Activated CD4-positive, alpha-beta T cell treated with anti-CD3 and anti-CD28 coated beads, Interleukin-2, amount 10 ng/mL, durations not matched to agents 24 days and 14 days (primary cell): ENCODE measurements at regions of chr3 and their contacts with region 1.

Region 1: GRCh38 chr3:22257252-22257651 is 506.2 kb upstream of the ZNF385D start:
- DNase-seq: no peak
- H3K4me3 Mint-ChIP-seq: no peak overlapping the region
- H3K27ac Mint-ChIP-seq: no peak overlapping the region
- H3K4me1 Mint-ChIP-seq: no peaks in the 10 kb centered on the region
- H3K27me3 Mint-ChIP-seq: no peaks in the 10 kb centered on the region

Region 2: DNA sequence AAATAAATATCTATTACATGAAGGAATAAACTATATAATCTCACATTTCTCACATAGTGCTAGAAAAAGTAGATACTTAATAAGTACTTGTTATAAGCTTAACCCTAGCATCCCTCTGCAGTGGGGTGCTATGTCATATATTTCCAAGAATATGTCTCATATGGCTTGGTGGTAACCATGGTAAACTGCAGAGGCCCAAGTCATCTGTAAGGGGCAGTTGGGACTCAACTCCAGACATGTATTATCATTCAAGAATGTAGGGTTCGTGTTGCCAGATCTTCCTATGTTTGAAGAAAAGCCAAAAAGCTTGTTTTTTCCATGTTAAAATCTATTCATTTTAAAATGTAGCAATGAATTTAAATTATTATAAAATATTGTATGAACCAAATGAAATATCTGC is 552.5 kb before region 1 on chr3:
- intact Hi-C with region 1: no loop called
- DNase-seq: no peak
- H3K4me3 Mint-ChIP-seq: no peak overlapping the region
- H3K27ac Mint-ChIP-seq: no peak overlapping the region
- H3K4me1 Mint-ChIP-seq: no peaks in the 10 kb centered on the region
- H3K27me3 Mint-ChIP-seq: no peaks in the 10 kb centered on the region

Region 3: DNA sequence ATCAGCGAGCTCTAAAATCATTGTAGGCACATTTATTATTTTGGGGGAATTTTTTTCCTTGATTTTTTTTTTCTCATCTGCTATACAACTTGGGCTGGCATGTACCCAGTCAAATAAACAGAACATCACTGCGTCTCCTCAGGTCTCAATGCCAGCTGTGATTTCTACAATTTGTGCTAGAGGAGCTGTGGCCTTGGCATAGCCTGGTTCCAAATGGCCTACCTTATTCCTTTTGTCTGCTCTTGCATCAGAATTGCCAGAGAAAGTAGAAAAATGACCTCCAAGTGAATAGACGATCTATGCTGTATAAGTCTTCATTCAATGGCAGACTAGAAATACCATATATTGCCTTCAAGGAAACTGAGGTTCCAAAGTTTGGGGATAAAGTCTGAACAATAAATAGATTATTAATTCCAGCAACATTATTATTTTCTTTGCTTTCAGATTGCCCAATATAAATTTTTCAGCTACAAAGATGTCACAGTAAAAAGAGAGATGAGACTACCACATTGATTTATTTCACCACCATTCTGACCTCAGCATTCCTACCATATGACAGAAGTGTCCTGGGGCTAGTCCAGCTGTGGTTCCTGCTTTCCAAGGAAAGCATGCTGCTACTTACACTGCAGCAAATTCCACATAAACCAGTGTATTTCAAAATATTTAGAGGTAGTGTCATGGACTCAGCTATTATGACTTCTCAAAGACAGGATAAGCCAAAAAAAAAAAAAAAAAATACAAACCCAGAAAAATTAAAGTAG is 12.3 kb before region 1 on chr3:
- intact Hi-C with region 1: loop called (anchors 1 kb)
- DNase-seq: no peak
- H3K4me3 Mint-ChIP-seq: no peak overlapping the region
- H3K27ac Mint-ChIP-seq: no peak overlapping the region
- H3K4me1 Mint-ChIP-seq: no peaks in the 10 kb centered on the region
- H3K27me3 Mint-ChIP-seq: no peaks in the 10 kb centered on the region

Region 4: DNA sequence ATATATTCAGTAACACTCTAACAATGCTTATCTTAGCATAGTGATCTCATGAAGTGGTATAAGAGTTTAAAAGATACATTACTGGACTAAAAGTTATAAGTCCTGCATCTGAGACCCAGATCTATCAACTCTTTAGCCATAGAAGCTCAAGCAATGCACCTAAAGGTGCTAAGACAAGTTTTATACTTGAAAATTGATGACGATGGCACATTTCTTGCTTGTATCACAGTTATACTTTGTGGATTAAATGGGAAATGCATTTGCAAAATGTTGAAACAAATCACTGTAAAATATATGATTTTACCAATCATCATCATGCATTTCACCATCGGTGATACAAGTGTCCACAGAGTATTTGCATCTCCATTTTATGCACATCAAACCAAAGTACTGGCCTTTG is 19.1 kb after region 1 on chr3:
- intact Hi-C with region 1: no loop called
- DNase-seq: no peak
- H3K4me3 Mint-ChIP-seq: no peak overlapping the region
- H3K27ac Mint-ChIP-seq: no peak overlapping the region
- H3K4me1 Mint-ChIP-seq: no peaks in the 10 kb centered on the region
- H3K27me3 Mint-ChIP-seq: no peaks in the 10 kb centered on the region